SK-N-SH (cell line): ENCODE measurements at regions of chr17 and their contacts with region 1.

Region 1: GRCh38 chr17:51734462-51734861 is 424.1 kb downstream of the CA10 start:
- DNase-seq: no peak
- H3K4me3 ChIP-seq: peak overlapping the region in 1 of 2 experiments; percentile 38; a peak in 1 of 4 replicates
- H3K27ac ChIP-seq: no peak overlapping the region
- H3K4me1 ChIP-seq: peaks cover 0 to 3% of the 10 kb centered on the region in 2 experiments; a peak in 1 of 4 replicates
- H3K27me3 ChIP-seq: no peaks in the 10 kb centered on the region
- CTCF ChIP-seq: peak; percentile 31
- EP300 ChIP-seq: no peak
- RAD21 ChIP-seq: peak; percentile 11; the same call in 1 of the 2 replicates

Region 2: DNA sequence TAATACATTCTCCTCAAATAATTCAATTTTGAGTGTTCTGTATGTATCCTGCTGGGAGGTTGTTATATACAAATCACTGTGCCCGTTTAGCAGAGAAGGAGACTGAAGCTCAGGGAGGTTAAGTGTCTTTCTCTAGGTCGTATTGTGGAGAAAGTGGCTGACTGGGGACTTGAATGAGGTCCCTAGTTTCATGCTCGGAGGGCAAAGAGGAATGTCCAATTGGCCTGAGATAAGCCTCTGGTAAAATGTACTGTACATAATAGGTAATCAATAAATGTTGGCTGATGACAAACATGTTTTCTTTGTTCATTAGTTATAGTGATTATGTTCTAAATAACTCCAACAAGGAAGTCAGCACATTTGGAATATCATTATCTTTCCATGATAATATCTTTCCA is 31.5 kb before region 1 on chr17:
- CTCF ChIA-PET with region 1: no interaction called
- POLR2A ChIA-PET with region 1: no interaction called
- DNase-seq: no peak
- H3K4me3 ChIP-seq: no peak overlapping the region
- H3K27ac ChIP-seq: no peak overlapping the region
- H3K4me1 ChIP-seq: no peaks in the 10 kb centered on the region
- H3K27me3 ChIP-seq: no peaks in the 10 kb centered on the region
- CTCF ChIP-seq: no peak
- EP300 ChIP-seq: no peak
- RAD21 ChIP-seq: no peak

Region 3: GRCh38 chr17:51718953-51719352 is 15.5 kb before region 1 on chr17:
- CTCF ChIA-PET with region 1: interaction called, 10 read pairs
- POLR2A ChIA-PET with region 1: no interaction called
- DNase-seq: no peak
- H3K4me3 ChIP-seq: no peak overlapping the region
- H3K27ac ChIP-seq: no peak overlapping the region
- H3K4me1 ChIP-seq: peaks cover 0 to 3% of the 10 kb centered on the region in 2 experiments; a peak in 1 of 4 replicates
- H3K27me3 ChIP-seq: no peaks in the 10 kb centered on the region
- CTCF ChIP-seq: no peak
- EP300 ChIP-seq: no peak
- RAD21 ChIP-seq: no peak